Common myeloid progenitor, CD34-positive (primary cell): ENCODE measurements at regions of chr1 and their contacts with region 1.

Region 1: GRCh38 chr1:53592521-53592982 is 133.4 kb downstream of the DMRTB1 start:
- DNase-seq: peak; percentile 22 to 70 (median 65)
- H3K4me3 ChIP-seq: no peak overlapping the region
- H3K27ac ChIP-seq: no peak overlapping the region
- H3K4me1 ChIP-seq: peaks cover 0 to 16% (median 10%) of the 10 kb centered on the region in 4 experiments
- H3K27me3 ChIP-seq: peaks cover 0 to 2% (median 0%) of the 10 kb centered on the region in 5 experiments

Region 2: GRCh38 chr1:53470155-53470554 is 122.4 kb before region 1 on chr1:
- CTCF ChIA-PET with region 1: no interaction called
- POLR2A ChIA-PET with region 1: no interaction called
- DNase-seq: no peak
- H3K4me3 ChIP-seq: no peak overlapping the region
- H3K27ac ChIP-seq: no peak overlapping the region
- H3K4me1 ChIP-seq: peaks cover 0 to 24% (median 11%) of the 10 kb centered on the region in 4 experiments
- H3K27me3 ChIP-seq: no peaks in the 10 kb centered on the region

Region 3: DNA sequence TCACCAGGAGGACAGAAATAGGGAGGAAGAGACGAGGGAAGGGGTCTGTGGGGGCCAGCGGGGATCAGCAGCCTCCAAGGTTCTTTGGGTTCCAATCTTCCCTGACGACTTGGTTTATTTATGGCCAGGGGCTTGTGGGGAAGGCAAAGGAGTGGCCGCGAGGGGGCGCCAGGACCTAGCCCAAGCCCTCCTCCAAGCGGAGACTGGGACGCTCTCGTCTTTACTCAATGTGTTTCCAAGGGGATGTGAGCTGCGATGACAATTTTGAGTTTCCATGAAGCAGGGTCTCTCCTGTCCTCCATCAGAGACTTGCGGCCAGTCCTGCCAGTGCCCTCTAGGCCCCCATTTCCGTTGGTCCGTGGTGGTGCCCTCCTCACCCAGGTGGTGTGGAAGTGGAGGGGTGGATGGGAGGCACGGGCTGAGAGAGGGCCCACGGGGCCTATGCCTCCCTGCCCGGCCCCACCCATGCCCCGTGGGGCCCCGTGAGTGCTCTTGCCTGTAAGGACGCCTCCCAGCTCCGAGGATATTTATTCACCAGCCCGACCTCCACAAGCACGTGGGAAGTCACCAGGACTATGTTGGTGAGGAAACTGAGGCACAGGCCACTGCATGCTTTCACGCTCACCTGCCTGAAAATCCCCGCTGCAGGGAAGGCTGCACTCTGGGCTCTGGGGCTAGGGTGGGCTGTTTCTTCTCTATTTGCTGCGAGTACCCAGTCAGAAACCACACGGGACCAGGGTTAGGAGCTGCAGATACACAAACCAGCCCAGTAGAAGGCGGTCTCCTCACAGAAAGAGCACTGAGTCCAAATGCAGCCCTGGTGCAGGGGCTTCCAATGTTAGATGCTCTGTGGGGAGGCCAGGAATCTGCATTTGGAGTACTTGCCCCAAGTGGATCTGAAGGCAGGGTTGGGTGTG is 106.8 kb before region 1 on chr1:
- CTCF ChIA-PET with region 1: interaction called, 43 read pairs
- POLR2A ChIA-PET with region 1: no interaction called
- DNase-seq: peak; percentile 78 to 92 (median 87)
- H3K4me3 ChIP-seq: no peak overlapping the region
- H3K27ac ChIP-seq: no peak overlapping the region
- H3K4me1 ChIP-seq: peaks cover 0 to 5% (median 0%) of the 10 kb centered on the region in 4 experiments
- H3K27me3 ChIP-seq: peaks cover 0 to 2% (median 0%) of the 10 kb centered on the region in 5 experiments

Region 4: GRCh38 chr1:53582211-53583020 is 10.1 kb before region 1 on chr1:
- CTCF ChIA-PET with region 1: interaction called, 27 read pairs
- POLR2A ChIA-PET with region 1: interaction called, 5 read pairs
- DNase-seq: peak in 1 of 3 donors; percentile 40
- H3K4me3 ChIP-seq: no peak overlapping the region
- H3K27ac ChIP-seq: no peak overlapping the region
- H3K4me1 ChIP-seq: peaks cover 5 to 19% (median 11%) of the 10 kb centered on the region in 4 experiments
- H3K27me3 ChIP-seq: no peaks in the 10 kb centered on the region